ENCODE measurements at regions of chr22 and their contacts with region 1.

Region 1: GRCh38 chr22:45268958-45269844 is 15.5 kb upstream of the UPK3A start:
- DNase-seq: peak; percentile 88
- ATAC-seq: peak; percentile 90
- H3K4me3 Mint-ChIP-seq: peak overlapping the region; percentile 57
- H3K27ac Mint-ChIP-seq: no peak overlapping the region
- H3K4me1 Mint-ChIP-seq: peaks cover 8% of the 10 kb centered on the region
- H3K27me3 Mint-ChIP-seq: peaks cover 37% of the 10 kb centered on the region

Region 2: GRCh38 chr22:45149671-45150070 is 119.5 kb before region 1 on chr22:
- CTCF ChIA-PET with region 1: no interaction called
- DNase-seq: no peak
- ATAC-seq: no peak
- H3K4me3 Mint-ChIP-seq: no peak overlapping the region
- H3K27ac Mint-ChIP-seq: no peak overlapping the region
- H3K4me1 Mint-ChIP-seq: no peaks in the 10 kb centered on the region
- H3K27me3 Mint-ChIP-seq: no peaks in the 10 kb centered on the region

Region 3: DNA sequence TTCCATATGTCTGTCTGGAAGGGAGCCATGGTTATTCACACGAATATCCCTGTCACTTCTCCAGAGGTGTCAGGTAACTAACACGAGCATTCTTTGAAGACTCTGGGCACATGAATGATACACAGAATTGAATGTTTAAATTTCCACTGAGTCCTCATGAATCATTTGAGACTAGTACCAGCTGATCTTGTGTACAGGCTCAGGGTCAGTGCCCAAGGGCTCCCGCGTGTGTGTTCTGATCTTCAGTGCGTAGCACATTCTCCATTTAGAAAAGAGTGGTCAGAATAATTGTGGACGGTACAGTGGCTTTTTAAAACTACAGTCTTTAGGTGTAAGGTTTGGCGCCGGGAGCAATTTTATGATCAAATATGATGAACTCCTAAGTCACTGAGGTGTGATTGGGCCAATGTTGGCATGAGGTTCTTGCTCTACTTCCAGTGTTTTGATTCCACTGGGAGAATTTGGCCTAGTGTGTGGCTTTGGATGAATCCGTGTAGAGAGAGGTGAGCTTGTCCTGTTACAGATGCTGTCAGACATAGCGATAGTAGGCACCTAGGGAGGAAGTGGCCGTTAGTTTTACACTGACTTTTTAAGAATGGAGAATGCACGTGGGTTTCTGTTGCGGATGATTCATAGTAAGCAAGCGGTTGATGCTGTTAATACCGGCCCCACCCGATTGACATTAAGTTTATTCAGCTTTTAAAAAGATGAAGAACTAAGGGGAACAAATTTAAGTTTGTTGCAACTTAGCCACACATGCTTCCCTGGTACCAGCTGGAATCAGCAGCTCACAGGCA is 83.3 kb before region 1 on chr22:
- CTCF ChIA-PET with region 1: no interaction called
- DNase-seq: no peak
- ATAC-seq: peak; percentile 51
- H3K4me3 Mint-ChIP-seq: no peak overlapping the region
- H3K27ac Mint-ChIP-seq: peak overlapping the region; percentile 64
- H3K4me1 Mint-ChIP-seq: peaks cover 26% of the 10 kb centered on the region
- H3K27me3 Mint-ChIP-seq: no peaks in the 10 kb centered on the region

Region 4: DNA sequence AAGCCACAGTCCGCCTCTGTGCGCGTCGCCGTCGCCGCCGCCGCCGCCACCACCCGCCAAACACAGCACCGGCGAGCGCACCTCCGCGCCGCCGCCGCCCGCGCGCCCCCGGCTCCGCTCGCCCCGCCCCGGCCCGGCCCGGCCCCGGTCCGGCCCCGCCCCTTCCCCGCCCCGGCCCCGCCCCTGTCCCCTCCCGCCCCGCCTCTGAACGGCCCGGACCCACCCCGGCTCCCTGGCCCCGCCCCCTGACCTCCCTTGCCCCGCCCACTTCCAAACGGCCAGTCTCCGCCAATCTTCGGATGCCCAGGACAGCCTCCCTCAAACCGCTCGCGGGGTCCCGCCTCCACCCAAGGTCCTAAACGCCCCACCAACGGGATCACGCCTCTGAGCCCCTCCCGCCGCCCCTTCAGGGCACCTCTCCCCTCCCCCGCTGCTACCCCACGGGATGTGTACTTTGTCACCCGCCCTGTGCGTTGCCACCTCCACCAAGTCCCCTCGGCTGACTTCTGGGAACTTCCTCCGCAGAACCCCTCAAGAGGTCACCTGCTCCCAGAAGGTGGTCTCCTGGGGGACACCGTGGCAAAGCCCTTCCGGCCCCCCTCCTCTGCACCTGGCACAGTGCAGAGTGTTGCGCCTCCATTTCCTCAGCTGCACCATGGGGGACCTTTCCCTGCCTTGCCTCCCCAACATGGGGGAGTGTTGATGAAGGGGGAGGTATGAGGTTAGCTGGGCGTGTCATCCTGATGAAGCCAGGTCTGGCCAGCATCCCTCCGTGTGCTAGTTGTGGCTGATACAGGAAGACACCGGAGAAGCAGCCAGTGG is 28.2 kb before region 1 on chr22 and contains the start of gene KIAA0930:
- CTCF ChIA-PET with region 1: no interaction called
- DNase-seq: peak; percentile 93
- ATAC-seq: peak; percentile 85
- H3K4me3 Mint-ChIP-seq: peak within 1 kb of the TSS; percentile 87
- H3K27ac Mint-ChIP-seq: peak within 1 kb of the TSS; percentile 90
- H3K4me1 Mint-ChIP-seq: peaks cover 32% of the 10 kb centered on the region
- H3K27me3 Mint-ChIP-seq: no peaks in the 10 kb centered on the region
- total RNA-seq, gene KIAA0930: 35.1 to 38.6 TPM

Region 5: DNA sequence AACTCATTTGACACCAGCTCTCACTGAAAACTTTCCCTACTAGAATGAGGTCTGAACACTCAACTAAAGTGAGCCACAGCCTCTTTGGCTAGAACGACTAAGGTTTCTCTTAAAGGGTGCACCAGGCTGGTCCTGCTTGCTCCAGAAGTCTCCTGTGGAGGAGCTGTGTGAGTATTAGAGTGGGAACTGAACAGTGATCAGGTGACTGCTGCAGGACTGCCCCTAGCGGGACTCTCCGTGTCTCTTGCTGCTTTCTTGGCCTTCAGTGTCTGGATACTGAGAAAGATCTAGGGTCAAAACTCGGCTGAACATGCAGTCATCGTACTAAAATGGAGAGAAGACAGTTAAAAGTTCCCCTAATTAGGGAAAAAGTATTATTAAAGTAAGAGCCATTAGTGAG is 75.1 kb after region 1 on chr22:
- CTCF ChIA-PET with region 1: no interaction called
- DNase-seq: no peak
- ATAC-seq: no peak
- H3K4me3 Mint-ChIP-seq: no peak overlapping the region
- H3K27ac Mint-ChIP-seq: no peak overlapping the region
- H3K4me1 Mint-ChIP-seq: peaks cover 11% of the 10 kb centered on the region
- H3K27me3 Mint-ChIP-seq: no peaks in the 10 kb centered on the region

Region 6: GRCh38 chr22:45434981-45435380 is 165.8 kb after region 1 on chr22:
- CTCF ChIA-PET with region 1: interaction called, 12 read pairs
- DNase-seq: no peak
- ATAC-seq: no peak
- H3K4me3 Mint-ChIP-seq: no peak overlapping the region
- H3K27ac Mint-ChIP-seq: no peak overlapping the region
- H3K4me1 Mint-ChIP-seq: peaks cover 8% of the 10 kb centered on the region
- H3K27me3 Mint-ChIP-seq: no peaks in the 10 kb centered on the region

Measured in activated CD8-positive, alpha-beta memory T cell treated with anti-CD3 and anti-CD28 coated beads, Interleukin-2, amount 10 ng/mL, durations not matched to agents 7 days and 5 days (primary cell).